ENCODE measurements at regions of chr6 and their contacts with region 1.

Region 1: DNA sequence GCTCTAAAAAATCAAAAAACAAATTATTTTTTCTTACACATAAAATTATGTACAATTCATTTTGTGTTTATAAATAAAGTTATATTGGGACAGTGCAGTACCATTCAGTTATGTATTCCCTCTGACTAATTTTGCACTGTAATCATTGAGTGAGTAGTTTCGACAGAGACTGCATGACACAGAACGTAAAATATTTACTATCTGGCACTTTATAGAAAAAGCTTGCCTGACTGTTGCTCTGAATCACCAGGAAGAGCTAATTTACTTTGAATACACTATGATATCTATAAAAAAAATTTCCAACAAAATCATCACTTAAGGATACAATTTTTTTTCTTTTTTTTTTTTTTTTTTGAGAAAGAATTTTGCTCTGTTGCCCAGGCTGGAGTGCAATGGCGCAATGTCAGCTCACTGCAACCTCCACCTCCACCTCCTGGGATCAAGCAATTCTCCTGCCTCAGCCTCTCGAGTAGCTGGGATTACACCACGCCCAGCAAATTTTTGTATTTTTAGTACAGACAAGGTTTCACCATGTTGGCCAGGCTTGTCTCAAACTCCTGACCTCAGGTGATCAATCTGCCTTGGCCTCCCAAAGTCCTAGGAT is 11.0 kb upstream of the KHDC1L start:
- DNase-seq: peak; percentile 79
- H3K4me3 Mint-ChIP-seq: no peak overlapping the region
- H3K27ac Mint-ChIP-seq: no peak overlapping the region
- H3K4me1 Mint-ChIP-seq: peaks cover 11% of the 10 kb centered on the region
- H3K27me3 Mint-ChIP-seq: no peaks in the 10 kb centered on the region
- CTCF ChIP-seq: no peak

Region 2: GRCh38 chr6:72787391-72788031 is 448.7 kb before region 1 on chr6:
- CTCF ChIA-PET with region 1: no interaction called
- POLR2A ChIA-PET with region 1: interaction called, 3 read pairs
- intact Hi-C with region 1: loop called (anchors 5 kb)
- DNase-seq: peak; percentile 92
- H3K4me3 Mint-ChIP-seq: no peak overlapping the region
- H3K27ac Mint-ChIP-seq: peak overlapping the region; percentile 74
- H3K4me1 Mint-ChIP-seq: peaks cover 33% of the 10 kb centered on the region
- H3K27me3 Mint-ChIP-seq: no peaks in the 10 kb centered on the region
- CTCF ChIP-seq: no peak

Region 3: DNA sequence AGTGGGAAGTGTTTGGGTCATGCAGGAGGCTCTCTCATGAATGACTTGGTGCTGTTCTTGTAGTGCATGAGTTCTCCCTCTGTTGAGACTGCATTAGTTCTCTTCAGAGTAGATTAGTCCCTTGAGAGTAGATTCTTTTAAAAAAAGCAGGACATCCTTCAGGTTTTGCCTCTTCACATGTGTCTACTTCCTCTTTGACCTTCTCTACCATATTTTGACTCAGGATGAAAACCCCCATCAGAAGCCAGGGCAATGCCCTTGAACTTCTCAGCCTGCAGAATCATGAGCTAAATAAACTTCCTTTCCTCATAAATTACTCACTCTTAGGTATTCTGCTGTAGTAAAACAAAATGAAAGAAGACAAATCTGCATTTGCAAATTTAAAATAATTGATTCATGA is 630.1 kb after region 1 on chr6:
- CTCF ChIA-PET with region 1: no interaction called
- POLR2A ChIA-PET with region 1: no interaction called
- intact Hi-C with region 1: no loop called
- DNase-seq: no peak
- H3K4me3 Mint-ChIP-seq: no peak overlapping the region
- H3K27ac Mint-ChIP-seq: no peak overlapping the region
- H3K4me1 Mint-ChIP-seq: no peaks in the 10 kb centered on the region
- H3K27me3 Mint-ChIP-seq: no peaks in the 10 kb centered on the region
- CTCF ChIP-seq: no peak